Prostate gland (tissue), 2 donors: ENCODE measurements at regions of chr6 and their contacts with region 1.

Region 1: GRCh38 chr6:11232193-11232769 is at the start of gene NEDD9:
- DNase-seq: peak; percentile 99
- H3K4me3 ChIP-seq: peak within 1 kb of the TSS; percentile 53 to 59
- H3K27ac ChIP-seq: peak within 1 kb of the TSS; percentile 86 to 94
- H3K4me1 ChIP-seq: no peaks in the 10 kb centered on the region
- H3K27me3 ChIP-seq: no peaks in the 10 kb centered on the region
- CTCF ChIP-seq: peak in 1 of 4 experiments; percentile 11
- POLR2A ChIP-seq: peak; percentile 100
- total RNA-seq, gene NEDD9: 51.1 to 72.1 TPM

Region 2: GRCh38 chr6:11277275-11278206 is 45.3 kb after region 1 on chr6:
- intact Hi-C with region 1: loop called (anchors 5 kb)
- DNase-seq: peak; percentile 46
- H3K4me3 ChIP-seq: no peak overlapping the region
- H3K27ac ChIP-seq: peak overlapping the region; percentile 6 to 46
- H3K4me1 ChIP-seq: peaks cover 12% of the 10 kb centered on the region
- H3K27me3 ChIP-seq: no peaks in the 10 kb centered on the region
- CTCF ChIP-seq: no peak
- POLR2A ChIP-seq: no peak